ENCODE measurements at regions of chr6 and their contacts with region 1.

Region 1: GRCh38 chr6:29847871-29848630 is 20.4 kb downstream of the HLA-G start:
- DNase-seq: peak; percentile 92

Region 2: DNA sequence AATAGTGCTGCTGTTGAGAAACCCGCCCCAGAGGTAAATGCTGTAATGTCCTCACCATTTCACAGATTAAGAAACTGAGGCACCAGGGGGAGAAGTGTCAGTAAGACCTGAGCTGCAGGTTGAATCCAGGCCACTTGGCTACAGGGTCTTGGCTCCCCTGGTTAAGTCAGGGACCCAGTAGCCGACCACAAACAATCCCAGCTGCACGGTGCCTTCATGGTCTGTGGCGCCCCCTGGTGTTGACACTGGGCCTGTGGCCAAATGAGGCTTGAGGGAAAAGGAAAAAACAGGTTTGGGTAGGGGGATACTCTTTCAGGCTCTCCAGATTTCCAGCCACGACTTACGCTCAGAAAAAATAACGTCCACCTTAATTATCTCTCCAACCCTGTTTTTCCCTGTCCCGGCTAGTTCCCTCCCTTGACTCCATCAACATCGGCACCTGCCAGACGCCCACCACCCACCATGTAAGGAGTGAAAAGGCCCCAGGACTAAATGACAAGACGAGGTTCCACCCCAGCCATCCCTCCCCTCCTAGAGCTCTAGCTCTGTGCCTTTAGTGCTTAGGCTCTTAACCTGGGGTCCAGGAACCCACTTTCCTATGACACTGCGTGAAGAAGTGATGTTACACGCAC is 165.4 kb after region 1 on chr6:
- intact Hi-C with region 1: loop called (anchors 1 kb)
- DNase-seq: no peak

Region 3: GRCh38 chr6:30130887-30131862 is 283.1 kb after region 1 on chr6:
- intact Hi-C with region 1: loop called (anchors 10 kb)
- DNase-seq: peak; percentile 82

Measured in cardiac septum (tissue), 1 donor.